Activated CD4-positive, alpha-beta T cell treated with anti-CD3 and anti-CD28 coated beads, Interleukin-2, amount 10 ng/mL, durations not matched to agents 24 days and 14 days (primary cell): ENCODE measurements at regions of chr10 and their contacts with region 1.

Region 1: DNA sequence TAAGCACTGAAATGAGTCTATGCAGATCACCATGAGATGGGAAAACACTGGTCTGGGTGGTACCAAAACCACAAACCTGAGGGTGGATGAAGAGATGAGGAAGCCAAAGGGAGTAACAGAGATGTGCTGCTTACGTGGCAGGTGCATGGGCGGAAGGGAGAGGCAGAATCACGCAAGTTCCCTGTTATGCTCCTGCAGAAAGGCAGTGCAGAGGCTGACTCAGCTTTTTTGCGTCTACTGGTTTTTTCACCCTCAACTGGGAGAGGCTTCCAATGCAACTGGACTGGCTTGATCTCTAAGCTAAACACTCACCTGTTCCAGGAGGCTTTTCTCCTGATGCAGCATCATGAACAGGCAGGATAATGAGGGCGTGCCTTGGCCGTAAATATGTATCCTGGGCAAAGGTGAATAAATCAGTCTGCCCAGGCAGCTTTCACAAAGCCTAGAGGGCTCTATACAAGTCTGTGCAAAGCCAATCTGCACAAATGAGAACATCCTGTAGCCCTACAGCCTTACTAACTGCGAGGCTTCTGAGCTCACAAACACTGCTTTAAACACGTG is 95.4 kb upstream of the AFAP1L2 start:
- DNase-seq: peak; percentile 87
- H3K4me3 Mint-ChIP-seq: peak overlapping the region; percentile 64
- H3K27ac Mint-ChIP-seq: peak overlapping the region; percentile 89
- H3K4me1 Mint-ChIP-seq: peaks cover 63% of the 10 kb centered on the region
- H3K27me3 Mint-ChIP-seq: no peaks in the 10 kb centered on the region

Region 2: DNA sequence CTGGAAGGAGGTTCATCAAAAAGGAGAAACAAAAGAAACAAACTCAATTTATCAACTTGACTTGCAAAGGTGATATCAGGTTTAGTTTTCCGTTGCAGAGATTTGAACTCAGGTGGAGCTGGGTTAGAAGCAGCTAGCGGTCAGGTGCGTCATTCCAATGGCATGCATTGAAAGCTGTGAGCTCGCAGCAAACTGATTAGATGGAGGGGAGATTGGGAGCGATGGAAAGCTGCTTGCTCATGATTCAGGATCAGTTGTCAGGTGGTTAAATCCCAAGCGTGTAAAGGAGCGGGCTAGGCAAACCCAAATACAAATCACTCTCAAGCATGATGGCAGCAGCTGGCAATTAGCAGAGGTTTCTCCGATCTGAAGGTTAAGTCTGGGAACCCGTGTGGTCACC is 46.1 kb before region 1 on chr10:
- intact Hi-C with region 1: no loop called
- DNase-seq: no peak
- H3K4me3 Mint-ChIP-seq: no peak overlapping the region
- H3K27ac Mint-ChIP-seq: no peak overlapping the region
- H3K4me1 Mint-ChIP-seq: peaks cover 3% of the 10 kb centered on the region
- H3K27me3 Mint-ChIP-seq: no peaks in the 10 kb centered on the region

Region 3: GRCh38 chr10:114526504-114527238 is 27.0 kb after region 1 on chr10:
- intact Hi-C with region 1: loop called (anchors 1 kb)
- DNase-seq: peak; percentile 97
- H3K4me3 Mint-ChIP-seq: peak overlapping the region; percentile 78
- H3K27ac Mint-ChIP-seq: peak overlapping the region; percentile 97
- H3K4me1 Mint-ChIP-seq: peaks cover 53% of the 10 kb centered on the region
- H3K27me3 Mint-ChIP-seq: no peaks in the 10 kb centered on the region